Naive thymus-derived CD8-positive, alpha-beta T cell (primary cell): ENCODE measurements at regions of chr17 and their contacts with region 1.

Region 1: DNA sequence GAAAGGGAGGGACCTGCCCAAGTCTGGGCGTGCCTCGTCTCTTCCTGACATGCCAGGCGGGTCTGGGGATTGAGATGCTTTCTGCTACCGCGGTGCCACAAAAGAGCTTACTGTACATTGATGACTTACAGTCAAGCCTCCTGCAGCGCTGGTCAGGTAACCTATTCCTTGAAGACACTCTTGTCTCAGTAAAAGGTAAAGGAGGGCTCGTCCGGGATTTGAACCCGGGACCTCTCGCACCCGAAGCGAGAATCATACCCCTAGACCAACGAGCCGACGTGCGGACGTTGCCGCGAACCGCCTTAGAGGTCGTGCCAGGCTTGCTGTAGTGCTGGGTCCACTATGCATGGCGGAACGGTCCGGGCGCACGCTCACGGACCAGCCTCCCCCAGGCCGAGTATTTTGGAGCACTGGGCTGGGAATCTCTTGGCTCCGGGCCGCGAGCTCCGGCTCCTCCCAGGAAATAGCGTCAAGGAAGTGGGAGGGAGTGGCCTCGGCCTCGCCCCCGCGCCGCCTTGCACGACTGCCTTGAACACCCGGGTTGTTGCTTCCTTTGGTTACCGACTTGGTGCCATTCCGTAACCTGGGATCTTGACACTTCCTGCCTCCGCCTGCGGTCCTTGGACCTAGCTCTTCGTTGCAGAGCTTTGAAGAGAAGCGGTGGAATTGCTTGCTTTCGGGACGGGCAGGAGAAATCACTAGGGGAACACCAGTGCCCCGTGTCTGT is 12.4 kb upstream of the AURKB start:
- DNase-seq: peak; percentile 80 to 96 (median 90)
- ATAC-seq: peak; percentile 45 to 47
- H3K4me3 Mint-ChIP-seq: peak overlapping the region; percentile 91 to 99 (median 96)
- H3K27ac Mint-ChIP-seq: peak overlapping the region; percentile 93 to 100 (median 98)
- H3K4me1 Mint-ChIP-seq: peaks cover 43 to 72% (median 66%) of the 10 kb centered on the region in 4 donors
- H3K27me3 Mint-ChIP-seq: peaks cover 0 to 19% (median 0%) of the 10 kb centered on the region in 5 donors

Region 2: GRCh38 chr17:8118769-8119580 is 103.8 kb before region 1 on chr17:
- POLR2A ChIA-PET with region 1: interaction called, 71 read pairs
- DNase-seq: peak; percentile 78 to 98 (median 85)
- ATAC-seq: peak; percentile 64 to 71
- H3K4me3 Mint-ChIP-seq: peak overlapping the region; percentile 92 to 98 (median 94)
- H3K27ac Mint-ChIP-seq: peak overlapping the region; percentile 91 to 100 (median 97)
- H3K4me1 Mint-ChIP-seq: peaks cover 46 to 61% (median 56%) of the 10 kb centered on the region in 4 donors
- H3K27me3 Mint-ChIP-seq: peaks cover 15 to 55% (median 38%) of the 10 kb centered on the region in 5 donors

Region 3: GRCh38 chr17:8156246-8156992 is 66.4 kb before region 1 on chr17:
- POLR2A ChIA-PET with region 1: interaction called, 130 read pairs
- DNase-seq: peak; percentile 97 to 100 (median 100)
- ATAC-seq: peak; percentile 67 to 71
- H3K4me3 Mint-ChIP-seq: no peak overlapping the region
- H3K27ac Mint-ChIP-seq: no peak overlapping the region
- H3K4me1 Mint-ChIP-seq: peaks cover 31 to 70% (median 54%) of the 10 kb centered on the region in 4 donors
- H3K27me3 Mint-ChIP-seq: peaks cover 0 to 2% (median 0%) of the 10 kb centered on the region in 5 donors

Region 4: GRCh38 chr17:8189711-8190477 is 32.9 kb before region 1 on chr17 and contains the start of gene BORCS6:
- POLR2A ChIA-PET with region 1: interaction called, 414 read pairs
- DNase-seq: peak; percentile 83 to 98 (median 94)
- ATAC-seq: peak; percentile 67 to 71
- H3K4me3 Mint-ChIP-seq: peak within 1 kb of the TSS in 3 of 10 donors; percentile 3 to 51 (median 39)
- H3K27ac Mint-ChIP-seq: peak within 1 kb of the TSS in 8 of 10 donors; percentile 69 to 94 (median 92)
- H3K4me1 Mint-ChIP-seq: peaks cover 6 to 13% (median 12%) of the 10 kb centered on the region in 4 donors
- H3K27me3 Mint-ChIP-seq: no peaks in the 10 kb centered on the region
- polyA plus RNA-seq, gene BORCS6: 16.1 to 22.6 (median 16.9) TPM

Region 5: GRCh38 chr17:8237175-8237574 is 14.4 kb after region 1 on chr17:
- POLR2A ChIA-PET with region 1: interaction called, 437 read pairs
- DNase-seq: no peak
- ATAC-seq: no peak
- H3K4me3 Mint-ChIP-seq: no peak overlapping the region
- H3K27ac Mint-ChIP-seq: peak overlapping the region in 4 of 10 donors; percentile 1 to 73 (median 49)
- H3K4me1 Mint-ChIP-seq: peaks cover 11 to 47% (median 26%) of the 10 kb centered on the region in 4 donors
- H3K27me3 Mint-ChIP-seq: no peaks in the 10 kb centered on the region

Region 6: GRCh38 chr17:8294814-8295316 is 72.1 kb after region 1 on chr17:
- POLR2A ChIA-PET with region 1: interaction called, 71 read pairs
- DNase-seq: no peak
- ATAC-seq: no peak
- H3K4me3 Mint-ChIP-seq: peak overlapping the region; percentile 88 to 97 (median 94)
- H3K27ac Mint-ChIP-seq: peak overlapping the region; percentile 84 to 97 (median 95)
- H3K4me1 Mint-ChIP-seq: peaks cover 20 to 39% (median 31%) of the 10 kb centered on the region in 4 donors
- H3K27me3 Mint-ChIP-seq: no peaks in the 10 kb centered on the region